Ascending aorta (tissue), 2 donors: ENCODE measurements at regions of chr1 and their contacts with region 1.

Region 1: GRCh38 chr1:230978491-230979388 is at the starts of genes ARV1 and TTC13:
- DNase-seq: peak; percentile 94 to 99
- H3K4me3 ChIP-seq: peak within 1 kb of the TSS; percentile 90 to 97
- H3K27ac ChIP-seq: peak within 1 kb of the TSS; percentile 29 to 59
- H3K4me1 ChIP-seq: peaks cover 0 to 4% of the 10 kb centered on the region in 2 donors
- H3K27me3 ChIP-seq: no peaks in the 10 kb centered on the region
- CTCF ChIP-seq: peak; percentile 9 to 41 (median 28)
- total RNA-seq, gene ARV1: 9.7 TPM
- total RNA-seq, gene TTC13: 21.5 TPM

Region 2: DNA sequence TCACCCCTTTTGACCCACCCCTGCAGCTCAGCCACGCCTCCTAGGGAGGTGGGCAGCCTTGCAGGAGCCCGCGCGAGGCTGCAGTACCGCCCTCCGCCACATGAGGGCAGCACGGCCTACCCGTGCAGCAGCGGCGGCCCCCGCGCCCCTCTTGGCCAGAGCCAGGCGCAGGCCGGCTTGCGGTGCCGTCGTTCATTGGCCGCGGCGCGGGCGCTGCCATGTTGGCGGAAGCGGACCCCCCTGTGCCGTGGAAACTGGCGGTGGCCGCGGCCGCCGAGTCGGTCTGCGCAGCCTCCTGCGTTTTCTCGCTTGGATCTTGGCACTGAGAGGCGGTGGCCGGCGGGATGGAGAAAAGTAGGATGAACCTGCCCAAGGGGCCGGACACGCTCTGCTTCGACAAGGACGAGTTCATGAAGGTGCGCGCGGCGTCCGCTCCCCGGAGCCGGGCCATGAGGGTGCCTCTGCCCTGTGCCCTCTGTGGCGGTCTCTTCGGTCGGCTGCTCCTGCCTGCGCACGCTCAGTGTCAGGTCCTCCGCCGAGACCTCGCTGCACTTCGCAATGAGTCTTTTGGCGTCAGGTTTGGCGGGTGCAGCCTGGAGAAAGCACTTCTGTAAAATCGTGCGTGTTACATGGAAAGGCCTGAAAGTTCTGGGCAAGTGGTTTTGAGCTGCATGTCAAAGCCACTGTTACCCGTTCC is 336.3 kb before region 1 on chr1 and contains the start of gene COG2:
- intact Hi-C with region 1: loop called (anchors 1 kb)
- DNase-seq: peak; percentile 58 to 97
- H3K4me3 ChIP-seq: peak within 1 kb of the TSS; percentile 89 to 90
- H3K27ac ChIP-seq: peak within 1 kb of the TSS; percentile 80 to 91
- H3K4me1 ChIP-seq: peaks cover 8 to 11% of the 10 kb centered on the region in 2 donors
- H3K27me3 ChIP-seq: no peaks in the 10 kb centered on the region
- CTCF ChIP-seq: peak; percentile 99 to 100 (median 100)
- total RNA-seq, gene COG2: 8.4 TPM

Region 3: GRCh38 chr1:230849451-230850224 is 129.1 kb before region 1 on chr1:
- intact Hi-C with region 1: loop called (anchors 5 kb)
- DNase-seq: peak; percentile 56 to 95
- H3K4me3 ChIP-seq: peak overlapping the region in 1 of 2 donors; percentile 9
- H3K27ac ChIP-seq: peak overlapping the region; percentile 94 to 98
- H3K4me1 ChIP-seq: peaks cover 24 to 66% of the 10 kb centered on the region in 2 donors
- H3K27me3 ChIP-seq: no peaks in the 10 kb centered on the region
- CTCF ChIP-seq: no peak

Region 4: DNA sequence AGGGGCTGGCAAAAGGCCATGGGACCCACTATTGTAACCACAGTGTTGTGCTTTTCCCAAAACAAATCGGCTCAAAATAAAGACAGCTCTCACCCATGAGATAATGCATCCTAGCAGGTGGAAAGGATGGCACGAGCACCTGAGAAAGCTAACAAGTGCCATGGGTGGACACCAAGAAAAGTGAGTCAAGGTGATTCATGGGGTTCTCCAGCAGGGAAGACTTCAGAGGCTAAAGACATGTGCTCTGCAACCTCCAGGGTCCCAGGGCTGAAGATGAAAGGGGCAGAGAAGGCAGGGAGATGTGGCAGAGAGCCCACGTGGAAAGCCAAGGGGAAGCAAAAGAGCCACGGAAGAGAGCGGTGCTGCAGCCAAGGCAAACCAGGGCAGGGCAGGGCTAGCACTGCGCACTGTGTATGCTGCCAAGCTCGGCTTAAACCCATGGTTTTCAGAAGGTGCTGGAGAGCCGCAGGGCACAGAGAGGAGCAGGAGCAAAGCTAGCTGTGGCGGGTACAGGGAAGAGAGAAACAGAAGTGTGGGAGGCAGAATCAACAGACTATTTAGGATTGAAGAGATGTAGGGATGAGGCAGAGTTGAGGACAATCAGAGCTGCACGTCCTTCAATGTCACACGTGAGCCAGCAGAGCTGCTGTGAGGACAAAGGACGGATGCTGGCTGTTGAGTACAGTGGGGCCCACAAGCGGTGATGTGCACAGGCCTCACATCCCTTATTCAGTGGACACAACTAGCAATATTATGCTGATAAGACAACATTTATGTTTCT is 68.6 kb before region 1 on chr1:
- intact Hi-C with region 1: loop called (anchors 5 kb)
- DNase-seq: peak in 1 of 2 donors; percentile 73
- H3K4me3 ChIP-seq: peak overlapping the region in 1 of 2 donors; percentile 7
- H3K27ac ChIP-seq: peak overlapping the region; percentile 23 to 74
- H3K4me1 ChIP-seq: peaks cover 9 to 16% of the 10 kb centered on the region in 2 donors
- H3K27me3 ChIP-seq: no peaks in the 10 kb centered on the region
- CTCF ChIP-seq: no peak

Region 5: DNA sequence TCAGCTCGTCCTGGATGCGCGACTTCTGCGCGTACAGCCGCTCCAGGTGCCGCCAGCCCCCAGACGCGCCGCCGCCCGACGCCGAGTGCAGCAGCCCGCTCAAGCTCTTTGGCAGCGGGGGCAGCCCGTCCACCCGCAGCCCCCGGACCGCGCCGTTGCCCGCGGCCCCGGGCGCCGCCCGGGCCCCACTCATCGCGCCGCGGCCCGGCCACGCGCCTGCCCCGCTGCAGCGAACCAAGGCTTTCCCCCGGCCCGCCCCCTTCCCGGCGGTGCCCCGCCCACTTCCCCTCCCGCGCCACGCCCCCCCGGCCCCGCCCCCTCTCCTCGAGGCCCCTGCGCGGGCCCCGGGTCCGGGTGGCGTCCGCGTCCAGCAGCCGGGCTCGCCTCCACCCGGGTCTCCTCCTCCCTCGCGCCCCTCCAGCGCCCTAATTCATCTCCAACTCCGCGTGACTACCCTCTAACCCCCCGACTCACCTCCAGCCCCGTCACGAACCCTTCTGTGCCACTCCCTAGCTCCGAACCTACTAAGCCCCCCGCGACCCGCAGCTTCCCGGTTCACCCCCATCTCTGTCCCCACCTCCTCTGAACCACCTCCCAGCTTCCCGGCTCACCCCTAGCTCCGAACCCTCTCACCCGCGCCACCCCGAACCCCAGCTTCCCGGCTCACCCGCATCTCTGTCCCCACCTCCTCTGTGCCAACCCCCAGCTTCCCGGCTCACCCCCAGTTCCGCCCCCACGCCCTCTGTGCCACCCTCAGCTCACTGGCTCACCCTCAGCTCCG is 61.5 kb after region 1 on chr1 and contains the start of gene FAM89A:
- intact Hi-C with region 1: loop called (anchors 2 kb)
- DNase-seq: peak in 1 of 2 donors; percentile 73
- H3K4me3 ChIP-seq: peak within 1 kb of the TSS; percentile 87
- H3K27ac ChIP-seq: peak within 1 kb of the TSS in 1 of 2 donors; percentile 30
- H3K4me1 ChIP-seq: peaks cover 6 to 13% of the 10 kb centered on the region in 2 donors
- H3K27me3 ChIP-seq: no peaks in the 10 kb centered on the region
- CTCF ChIP-seq: no peak
- total RNA-seq, gene FAM89A: 47.5 TPM

Region 6: GRCh38 chr1:231139659-231140654 is 161.2 kb after region 1 on chr1:
- intact Hi-C with region 1: no loop called
- DNase-seq: no peak
- H3K4me3 ChIP-seq: no peak overlapping the region
- H3K27ac ChIP-seq: no peak overlapping the region
- H3K4me1 ChIP-seq: peaks cover 0 to 7% of the 10 kb centered on the region in 2 donors
- H3K27me3 ChIP-seq: no peaks in the 10 kb centered on the region
- CTCF ChIP-seq: no peak

Region 7: GRCh38 chr1:231240883-231241735 is 262.4 kb after region 1 on chr1 and contains the start of gene GNPAT:
- intact Hi-C with region 1: loop called (anchors 1 kb)
- DNase-seq: peak; percentile 23 to 92
- H3K4me3 ChIP-seq: peak within 1 kb of the TSS; percentile 85 to 90
- H3K27ac ChIP-seq: peak within 1 kb of the TSS; percentile 82 to 84
- H3K4me1 ChIP-seq: peaks cover 0 to 18% of the 10 kb centered on the region in 2 donors
- H3K27me3 ChIP-seq: no peaks in the 10 kb centered on the region
- CTCF ChIP-seq: no peak
- total RNA-seq, gene GNPAT: 34.8 TPM